ENCODE measurements at regions of chr12 and their contacts with region 1.

Region 1: GRCh38 chr12:32302218-32303173 is 96.9 kb upstream of the FGD4 start:
- DNase-seq: peak in 1 of 6 donors; percentile 24
- ATAC-seq: peak in 3 of 4 donors; percentile 61 to 70 (median 66)
- H3K4me3 ChIP-seq: no peak overlapping the region
- H3K27ac ChIP-seq: no peak overlapping the region
- H3K4me1 ChIP-seq: no peaks in the 10 kb centered on the region
- H3K27me3 ChIP-seq: no peaks in the 10 kb centered on the region
- CTCF ChIP-seq: peak in 2 of 4 donors; percentile 13 to 19

Region 2: DNA sequence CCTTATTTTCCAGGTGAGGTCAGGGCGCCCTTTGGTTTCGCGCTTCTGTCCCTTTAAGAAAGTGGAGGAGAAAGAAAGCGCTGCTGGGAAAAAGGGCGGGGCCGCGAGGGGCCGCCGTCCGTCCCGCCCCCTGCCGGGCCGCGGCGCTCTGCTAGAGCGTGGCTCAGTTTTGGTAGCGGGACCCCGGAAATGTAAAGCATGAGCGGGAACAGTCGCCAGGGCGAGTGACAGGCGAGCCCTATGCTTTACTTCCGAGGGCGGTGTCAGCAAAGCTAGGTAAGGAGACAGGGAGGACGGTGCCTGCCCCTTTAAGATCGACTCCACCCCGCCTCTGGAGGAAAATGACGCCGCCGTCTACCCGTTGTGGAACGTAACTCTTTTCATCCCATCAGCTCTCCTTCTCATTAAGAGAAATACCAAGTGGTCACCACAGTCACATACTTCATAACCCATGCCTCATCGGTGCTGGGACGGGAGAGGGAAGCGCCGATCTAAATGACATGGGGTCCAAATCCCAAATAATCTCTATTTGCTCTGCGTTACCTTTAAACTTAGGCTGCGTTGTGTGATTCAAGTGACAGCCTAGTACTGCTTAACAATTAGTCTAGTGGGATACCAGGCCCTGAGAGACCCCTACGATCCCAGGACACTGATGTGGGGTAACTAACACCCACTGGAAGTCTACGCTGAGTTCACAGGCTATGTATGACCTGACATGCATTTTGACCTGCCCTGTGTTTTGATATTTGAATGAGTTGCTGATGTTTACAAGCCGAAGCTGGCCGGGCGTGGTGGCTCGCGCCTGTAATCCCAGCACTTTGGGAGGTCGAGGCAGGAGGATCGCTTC is 643.2 kb before region 1 on chr12 and contains the start of gene ETFBKMT:
- intact Hi-C with region 1: loop called in 1 of 3 experiments (anchors 10 kb)
- DNase-seq: peak; percentile 89 to 95 (median 94)
- ATAC-seq: peak; percentile 91 to 96 (median 93)
- H3K4me3 ChIP-seq: peak within 1 kb of the TSS; percentile 38 to 76 (median 45)
- H3K27ac ChIP-seq: peak within 1 kb of the TSS; percentile 85 to 97 (median 90)
- H3K4me1 ChIP-seq: peaks cover 0 to 19% (median 18%) of the 10 kb centered on the region in 3 donors
- H3K27me3 ChIP-seq: no peaks in the 10 kb centered on the region
- CTCF ChIP-seq: peak in 3 of 4 donors; percentile 20 to 37 (median 34)
- total RNA-seq, gene ETFBKMT: 2.0 to 4.6 (median 3.1) TPM

Region 3: DNA sequence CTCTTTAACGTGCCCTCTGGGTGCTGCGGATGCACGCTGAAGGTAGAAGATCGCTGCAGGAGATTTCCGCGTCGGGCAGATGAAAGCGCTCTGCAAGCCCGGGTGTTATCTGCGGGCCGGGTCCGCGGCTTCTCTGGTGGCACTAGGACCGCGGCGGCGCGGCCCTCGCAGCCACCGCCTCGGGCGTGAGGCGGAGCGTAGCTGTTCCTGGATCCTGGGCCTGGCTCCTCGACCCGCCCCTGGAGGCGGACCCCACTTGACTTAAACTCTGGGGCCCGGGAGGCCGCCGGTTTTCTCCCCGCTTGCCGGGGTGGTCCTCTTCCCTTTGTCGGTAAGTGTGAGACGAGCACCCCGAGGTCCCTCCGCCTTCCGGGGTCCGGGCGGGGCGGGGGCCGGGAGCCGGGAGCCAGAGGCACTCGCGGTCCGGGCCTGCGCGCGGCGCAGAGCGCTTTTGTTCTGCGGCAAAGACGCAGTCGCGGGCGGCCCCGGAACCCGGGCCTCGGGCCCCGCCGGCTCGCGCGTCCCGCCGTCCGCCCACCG is 343.3 kb before region 1 on chr12 and contains the start of gene RESF1:
- intact Hi-C with region 1: loop called in 1 of 3 experiments (anchors 5 kb)
- DNase-seq: peak; percentile 79 to 93 (median 86)
- ATAC-seq: peak; percentile 97 to 98 (median 98)
- H3K4me3 ChIP-seq: peak within 1 kb of the TSS; percentile 50 to 69 (median 68)
- H3K27ac ChIP-seq: peak within 1 kb of the TSS; percentile 79 to 92 (median 86)
- H3K4me1 ChIP-seq: peaks cover 0 to 19% (median 17%) of the 10 kb centered on the region in 3 donors
- H3K27me3 ChIP-seq: no peaks in the 10 kb centered on the region
- CTCF ChIP-seq: no peak
- total RNA-seq, gene RESF1: 10.6 to 32.1 (median 15.6) TPM

Region 4: DNA sequence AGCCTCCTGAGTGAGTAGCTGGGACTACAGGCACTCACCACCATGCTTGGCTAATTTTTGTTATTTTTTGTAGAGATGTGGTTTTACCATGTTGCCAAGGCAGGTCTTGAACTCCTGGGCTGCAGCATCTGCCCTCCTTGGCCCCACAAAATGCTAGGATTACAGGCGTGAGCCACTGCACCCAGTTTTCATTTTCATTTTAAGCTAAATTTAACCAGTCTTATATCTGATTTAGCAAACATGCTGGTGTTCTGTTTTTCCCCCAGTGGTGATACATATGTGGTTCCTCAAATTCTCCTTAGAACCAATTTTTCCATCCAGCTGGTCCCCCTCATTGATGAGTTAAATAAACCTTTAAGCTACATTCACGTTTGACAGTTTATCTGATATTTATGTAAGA is 239.6 kb before region 1 on chr12:
- intact Hi-C with region 1: loop called in 1 of 3 experiments (anchors 10 kb)
- DNase-seq: no peak
- ATAC-seq: no peak
- H3K4me3 ChIP-seq: no peak overlapping the region
- H3K27ac ChIP-seq: no peak overlapping the region
- H3K4me1 ChIP-seq: no peaks in the 10 kb centered on the region
- H3K27me3 ChIP-seq: no peaks in the 10 kb centered on the region
- CTCF ChIP-seq: no peak

Measured in pancreas (tissue), 10 donors.